ENCODE measurements at regions of chr5 and their contacts with region 1.

Region 1: GRCh38 chr5:134692722-134693121 is 44.1 kb downstream of the SEC24A start:
- ATAC-seq: no peak
- H3K4me3 ChIP-seq: no peak overlapping the region
- H3K27ac ChIP-seq: no peak overlapping the region
- H3K4me1 ChIP-seq: no peaks in the 10 kb centered on the region

Region 2: GRCh38 chr5:134511788-134512650 is 180.7 kb before region 1 on chr5:
- in situ Hi-C with region 1: no loop called
- ATAC-seq: peak; percentile 55 to 91 (median 63)
- H3K4me3 ChIP-seq: no peak overlapping the region
- H3K27ac ChIP-seq: no peak overlapping the region
- H3K4me1 ChIP-seq: peaks cover 0 to 6% of the 10 kb centered on the region in 2 donors

Region 3: DNA sequence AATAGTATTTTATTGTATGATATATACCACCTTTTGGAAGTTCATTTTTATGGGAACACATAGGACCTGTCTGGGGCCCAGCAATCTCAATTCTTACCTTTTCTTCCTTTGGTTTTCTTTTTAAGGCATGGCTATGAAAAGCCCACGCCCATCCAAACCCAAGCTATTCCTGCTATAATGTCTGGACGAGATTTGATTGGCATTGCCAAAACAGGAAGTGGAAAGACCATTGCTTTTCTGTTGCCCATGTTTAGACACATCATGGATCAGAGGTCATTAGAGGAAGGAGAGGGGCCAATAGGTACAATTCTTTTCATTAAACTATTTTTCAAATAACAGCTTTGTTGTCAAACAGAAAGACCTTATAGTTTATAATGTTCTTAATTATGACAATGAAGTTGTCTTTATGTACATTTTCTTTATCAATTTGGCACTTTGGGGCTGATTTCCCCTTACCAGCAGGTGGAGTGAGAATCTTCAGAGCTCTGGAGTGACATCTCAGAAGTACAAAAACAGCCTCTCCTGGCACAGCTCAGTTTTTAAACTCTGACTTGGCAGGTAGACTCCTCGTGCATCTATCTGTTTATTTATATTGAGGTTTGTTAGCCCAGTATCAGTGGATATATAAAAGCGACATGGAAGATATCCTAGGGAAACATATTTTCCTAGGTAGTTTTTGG is 91.7 kb after region 1 on chr5:
- in situ Hi-C with region 1: loop called in 1 of 9 experiments (anchors 25 kb)
- ATAC-seq: peak in 2 of 8 experiments; percentile 37 to 43
- H3K4me3 ChIP-seq: no peak overlapping the region
- H3K27ac ChIP-seq: no peak overlapping the region
- H3K4me1 ChIP-seq: peaks cover 0 to 9% of the 10 kb centered on the region in 2 donors

Measured in motor neuron (in vitro differentiated cells).